GM10248 (cell line): ENCODE measurements at regions of chr1 and their contacts with region 1.

Region 1: DNA sequence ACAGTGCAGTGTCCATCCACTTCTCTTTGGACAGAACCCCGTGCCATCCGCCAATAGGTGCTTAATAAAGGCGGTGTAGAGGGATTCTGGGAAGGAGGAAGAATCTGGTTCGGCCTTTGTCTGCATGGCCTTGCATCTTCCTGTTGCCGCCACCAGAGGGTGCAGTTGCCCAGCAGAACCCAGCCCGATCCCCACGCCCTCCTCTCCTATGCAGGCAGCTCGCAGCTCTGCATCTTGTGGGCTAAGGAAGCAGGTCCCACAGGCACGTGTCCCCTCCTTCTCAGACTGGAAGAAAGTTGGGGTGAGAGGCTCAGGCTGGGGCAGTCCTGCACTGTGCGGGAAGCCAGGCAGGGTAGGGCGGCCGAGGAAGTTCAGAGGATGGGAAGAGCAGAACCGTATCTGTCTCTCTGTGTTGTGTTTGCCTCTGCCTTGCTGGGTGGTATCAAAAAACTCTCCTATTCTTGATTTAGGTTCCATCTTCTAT is 20.8 kb downstream of the NAV1 start:
- DNase-seq: peak; percentile 86
- CTCF ChIP-seq: peak; percentile 91

Region 2: GRCh38 chr1:201530741-201531531 is 28.8 kb before region 1 on chr1:
- CTCF ChIA-PET with region 1: interaction called, 18 read pairs
- POLR2A ChIA-PET with region 1: no interaction called
- DNase-seq: peak; percentile 73
- CTCF ChIP-seq: peak; percentile 67

Region 3: DNA sequence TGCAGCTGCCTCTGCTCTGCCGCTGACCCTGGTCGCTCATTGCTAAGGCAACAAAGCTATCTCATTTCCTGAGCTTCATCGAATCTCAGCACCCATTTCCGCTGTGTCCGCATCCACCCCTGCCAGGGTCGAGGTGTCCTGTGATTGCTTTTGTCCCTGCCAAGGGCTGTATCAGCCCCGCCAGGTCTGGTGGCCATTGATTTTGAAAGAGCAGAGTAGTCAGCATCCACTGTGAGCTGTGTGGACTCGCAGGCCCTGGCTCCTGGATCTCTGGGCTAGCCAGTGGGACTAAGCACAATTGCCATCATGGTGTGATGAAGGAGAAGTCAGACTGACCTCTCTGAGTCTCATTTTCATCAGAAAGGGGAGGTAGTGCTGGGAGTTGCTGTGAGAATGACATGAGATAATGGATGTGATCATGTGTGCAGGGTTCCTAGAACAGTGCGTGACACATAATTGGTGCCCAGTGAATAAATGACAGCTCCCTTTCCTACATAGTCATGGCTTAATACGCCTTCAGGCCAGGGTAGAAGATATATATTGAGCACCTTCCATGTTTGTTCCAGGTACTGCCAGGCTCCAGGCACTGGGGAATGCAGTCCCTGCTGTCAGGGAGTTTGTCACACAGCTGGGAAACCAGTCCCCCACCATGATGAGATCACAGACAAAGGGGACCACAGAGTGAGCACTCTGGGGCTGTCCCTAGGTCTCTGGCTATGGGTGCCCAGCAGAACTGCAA is 11.3 kb after region 1 on chr1:
- CTCF ChIA-PET with region 1: interaction called, 24 read pairs
- POLR2A ChIA-PET with region 1: no interaction called
- DNase-seq: no peak
- CTCF ChIP-seq: no peak

Region 4: GRCh38 chr1:201696217-201696761 is 136.6 kb after region 1 on chr1:
- CTCF ChIA-PET with region 1: interaction called, 19 read pairs
- POLR2A ChIA-PET with region 1: no interaction called
- DNase-seq: no peak
- CTCF ChIP-seq: no peak

Region 5: GRCh38 chr1:201792534-201793305 is 233.0 kb after region 1 on chr1:
- CTCF ChIA-PET with region 1: interaction called, 69 read pairs
- POLR2A ChIA-PET with region 1: no interaction called
- DNase-seq: peak; percentile 82
- CTCF ChIP-seq: peak; percentile 95